ENCODE measurements at regions of chr18 and their contacts with region 1.

Region 1: DNA sequence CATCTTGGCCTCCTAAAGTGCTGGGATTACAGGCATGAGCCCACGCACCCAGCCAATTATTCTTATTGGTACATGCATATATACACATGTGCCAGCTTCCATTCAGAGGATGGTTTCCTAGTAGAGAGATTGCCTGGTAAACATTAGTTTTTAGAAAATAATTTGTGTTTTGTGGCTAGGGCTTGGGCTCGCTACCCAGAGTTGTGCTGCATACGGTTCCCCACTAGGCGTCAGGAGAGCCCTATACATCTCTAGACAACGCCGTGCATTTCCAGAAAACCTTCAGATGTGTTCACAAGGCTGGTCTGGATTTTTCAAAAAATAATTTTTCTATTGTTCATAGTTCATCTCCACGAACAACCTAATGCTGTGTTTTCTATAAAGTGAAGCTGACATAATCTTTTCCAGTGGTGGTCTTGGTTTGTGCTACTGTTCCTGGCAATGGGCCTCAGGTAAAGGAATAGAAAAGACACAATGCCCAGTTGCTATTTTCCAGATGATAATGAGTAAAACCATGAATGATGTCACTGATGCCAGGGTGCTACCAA is 14.7 kb upstream of the AFG3L2 start:
- DNase-seq: peak in 8 of 9 experiments; percentile 28 to 74 (median 56)
- ATAC-seq: peak; percentile 99
- H3K4me3 ChIP-seq: no peak overlapping the region
- H3K4me3 Mint-ChIP-seq: no peak overlapping the region
- H3K27ac ChIP-seq: no peak overlapping the region
- H3K27ac Mint-ChIP-seq: no peak overlapping the region
- H3K4me1 ChIP-seq: no peaks in the 10 kb centered on the region
- H3K4me1 Mint-ChIP-seq: no peaks in the 10 kb centered on the region
- H3K27me3 ChIP-seq: no peaks in the 10 kb centered on the region
- H3K27me3 Mint-ChIP-seq: peaks cover 15% of the 10 kb centered on the region
- CTCF ChIP-seq: peak; percentile 78

Region 2: DNA sequence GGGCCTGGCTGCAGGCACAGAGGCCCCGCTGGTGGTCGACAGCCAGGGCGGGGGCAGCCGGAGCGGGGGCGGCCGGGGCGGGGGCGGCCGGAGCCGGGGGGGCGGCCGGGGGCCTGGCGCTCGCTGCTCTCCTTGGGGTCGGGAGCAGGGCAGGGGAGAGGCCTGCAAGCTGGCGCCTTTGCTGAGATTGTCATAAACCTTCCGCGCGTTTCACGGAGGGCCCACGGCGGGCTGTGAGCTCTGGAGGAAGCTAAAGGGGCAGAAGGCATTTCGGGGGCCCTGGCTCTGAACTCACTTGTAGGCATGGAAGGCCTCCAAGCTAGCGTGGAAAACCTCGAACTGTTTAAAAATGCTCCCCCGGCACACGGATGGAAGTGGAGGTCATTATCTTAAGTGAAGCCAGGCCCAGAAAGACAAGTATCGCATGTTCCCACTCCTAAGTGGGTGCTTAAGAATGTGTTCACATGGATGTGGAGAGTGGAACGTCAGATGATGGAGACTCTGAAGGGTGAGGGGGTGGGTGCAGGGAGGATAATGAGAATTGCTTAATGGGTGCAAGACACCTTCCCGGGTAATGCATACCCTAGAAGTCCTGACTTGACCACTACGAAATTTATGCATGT is 16.7 kb after region 1 on chr18:
- CTCF ChIA-PET with region 1: interaction called, 31 read pairs
- POLR2A ChIA-PET with region 1: no interaction called
- intact Hi-C with region 1: no loop called
- DNase-seq: peak in 3 of 9 experiments; percentile 31 to 52 (median 42)
- ATAC-seq: peak; percentile 9
- H3K4me3 ChIP-seq: peak overlapping the region in 1 of 2 experiments; percentile 71
- H3K4me3 Mint-ChIP-seq: peak overlapping the region; percentile 72
- H3K27ac ChIP-seq: no peak overlapping the region
- H3K27ac Mint-ChIP-seq: peak overlapping the region; percentile 30
- H3K4me1 ChIP-seq: peaks cover 18% of the 10 kb centered on the region
- H3K4me1 Mint-ChIP-seq: peaks cover 21% of the 10 kb centered on the region
- H3K27me3 ChIP-seq: no peaks in the 10 kb centered on the region
- H3K27me3 Mint-ChIP-seq: peaks cover 10% of the 10 kb centered on the region
- CTCF ChIP-seq: no peak